Endothelial cell of umbilical vein (primary cell): ENCODE measurements at regions of chr5 and their contacts with region 1.

Region 1: DNA sequence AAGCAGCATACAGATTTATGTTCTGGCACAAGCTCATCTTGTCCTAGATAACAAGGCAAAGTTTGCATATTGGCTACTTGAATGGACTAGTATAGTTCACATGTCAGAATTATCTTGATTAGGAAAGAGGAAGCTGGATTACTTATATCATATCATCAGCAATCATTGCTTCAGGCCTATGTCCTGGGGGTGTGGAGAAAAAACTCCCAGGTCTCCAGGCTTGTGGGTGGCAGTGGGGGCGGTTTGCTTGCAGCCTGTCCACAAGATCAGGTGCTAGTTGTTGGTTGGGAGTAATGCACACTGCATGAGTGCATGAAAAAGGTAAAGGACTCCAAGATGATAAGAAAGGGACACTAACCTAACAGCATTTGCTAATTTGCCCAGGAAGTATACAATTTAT is 326.4 kb upstream of the PDE4D start:
- DNase-seq: no peak
- H3K4me3 ChIP-seq: no peak overlapping the region
- H3K27ac ChIP-seq: no peak overlapping the region
- H3K4me1 ChIP-seq: no peaks in the 10 kb centered on the region
- H3K27me3 ChIP-seq: no peaks in the 10 kb centered on the region
- CTCF ChIP-seq: no peak
- POLR2A ChIP-seq: no peak

Region 2: GRCh38 chr5:60207040-60207439 is 12.9 kb before region 1 on chr5:
- CTCF ChIA-PET with region 1: interaction called, 11 read pairs
- POLR2A ChIA-PET with region 1: no interaction called
- dilution Hi-C with region 1: no loop called
- intact Hi-C with region 1: no loop called
- DNase-seq: no peak
- H3K4me3 ChIP-seq: no peak overlapping the region
- H3K27ac ChIP-seq: no peak overlapping the region
- H3K4me1 ChIP-seq: peaks cover 14% of the 10 kb centered on the region
- H3K27me3 ChIP-seq: peaks cover 0 to 1% of the 10 kb centered on the region in 2 experiments
- CTCF ChIP-seq: no peak
- POLR2A ChIP-seq: no peak